ENCODE measurements at regions of chr12 and their contacts with region 1.

Region 1: DNA sequence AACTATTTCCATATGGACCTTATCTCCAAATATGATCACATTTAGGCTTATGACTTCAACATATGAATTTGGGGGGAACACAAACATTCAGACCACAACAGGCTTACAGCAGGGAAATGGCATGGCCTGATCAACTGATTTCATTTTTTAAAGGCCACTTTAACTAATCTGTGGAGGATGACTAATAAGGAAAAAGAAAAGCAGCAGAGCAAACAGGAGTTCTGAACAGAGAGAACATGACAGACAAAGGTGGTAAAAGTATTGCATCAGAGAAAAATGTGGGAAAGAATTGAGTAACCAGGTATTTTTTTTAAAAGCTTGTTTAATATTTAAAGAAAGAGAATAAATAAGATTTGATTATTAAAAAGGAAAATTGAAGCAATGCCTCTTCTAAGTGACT is 366.1 kb upstream of the TMPO start:
- DNase-seq: peak; percentile 3
- ATAC-seq: peak; percentile 90
- H3K4me3 ChIP-seq: no peak overlapping the region
- H3K27ac ChIP-seq: no peak overlapping the region
- H3K4me1 ChIP-seq: no peaks in the 10 kb centered on the region
- H3K27me3 ChIP-seq: no peaks in the 10 kb centered on the region; a peak in 1 of 4 replicates
- CTCF ChIP-seq: no peak
- EP300 ChIP-seq: peak in 1 of 2 experiments; percentile 52; a peak in 1 of 4 replicates
- POLR2A ChIP-seq: no peak
- RAD21 ChIP-seq: no peak

Region 2: DNA sequence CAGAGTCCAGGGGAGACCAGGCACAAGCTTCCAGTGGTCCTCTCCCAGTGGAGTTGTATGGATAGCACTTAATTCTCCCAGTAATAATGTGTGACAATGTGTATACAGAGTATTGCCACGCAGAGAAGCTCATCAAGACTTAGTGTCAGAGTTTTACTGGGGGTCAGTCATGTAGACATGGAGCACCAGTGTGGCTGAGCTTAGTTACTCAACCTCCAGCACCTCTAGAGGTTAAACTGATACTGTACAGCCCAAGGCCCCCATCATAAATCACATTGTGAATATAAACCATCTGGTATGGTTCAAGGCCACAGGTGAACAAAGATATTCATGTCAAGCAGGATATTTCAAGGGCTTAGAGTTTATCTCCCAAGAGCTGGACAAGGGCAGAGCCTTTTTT is 12.0 kb before region 1 on chr12:
- CTCF ChIA-PET with region 1: interaction called, 6 read pairs
- POLR2A ChIA-PET with region 1: interaction called, 5 read pairs
- RAD21 ChIA-PET with region 1: interaction called, 3 read pairs
- SMC1A ChIA-PET with region 1: interaction called, 13 read pairs
- in situ Hi-C with region 1: no loop called
- intact Hi-C with region 1: no loop called
- DNase-seq: no peak
- ATAC-seq: peak; percentile 63; the same call in 2 of the 3 replicates
- H3K4me3 ChIP-seq: no peak overlapping the region
- H3K27ac ChIP-seq: no peak overlapping the region
- H3K4me1 ChIP-seq: no peaks in the 10 kb centered on the region
- H3K27me3 ChIP-seq: no peaks in the 10 kb centered on the region
- CTCF ChIP-seq: 0 out of 6 replicates have a peak, but pooled peaks of 1 of the 3 experiments have one; percentile 3
- EP300 ChIP-seq: no peak
- POLR2A ChIP-seq: no peak
- RAD21 ChIP-seq: no peak